ENCODE measurements at regions of chr10 and their contacts with region 1.

Region 1: DNA sequence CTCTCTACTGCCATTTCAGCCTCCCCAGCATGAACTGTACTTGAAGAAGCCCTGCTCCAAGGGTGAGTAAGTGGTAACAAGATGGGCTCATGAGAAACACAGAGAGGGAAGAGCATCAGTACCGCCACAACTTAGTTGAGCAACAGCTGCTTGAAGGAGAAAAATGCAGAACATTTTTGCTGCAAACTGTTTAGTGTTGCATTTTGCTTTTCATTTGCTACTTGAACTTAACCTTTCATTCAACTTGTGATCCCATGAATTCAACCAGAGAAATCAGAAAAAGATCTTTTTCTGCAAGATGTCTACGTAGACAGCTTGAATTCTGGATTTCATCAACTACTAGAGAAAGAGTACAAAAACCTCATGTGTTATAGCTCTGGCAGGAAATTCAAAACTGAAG is 40.7 kb downstream of the ANK3 start:
- DNase-seq: no peak
- H3K4me3 Mint-ChIP-seq: no peak overlapping the region
- H3K27ac Mint-ChIP-seq: no peak overlapping the region
- H3K4me1 Mint-ChIP-seq: no peaks in the 10 kb centered on the region
- H3K27me3 Mint-ChIP-seq: no peaks in the 10 kb centered on the region
- CTCF ChIP-seq: no peak

Region 2: GRCh38 chr10:60414805-60415585 is 66.0 kb after region 1 on chr10:
- CTCF ChIA-PET with region 1: no interaction called
- intact Hi-C with region 1: loop called (anchors 5 kb)
- DNase-seq: peak; percentile 22
- H3K4me3 Mint-ChIP-seq: no peak overlapping the region
- H3K27ac Mint-ChIP-seq: no peak overlapping the region
- H3K4me1 Mint-ChIP-seq: peaks cover 30% of the 10 kb centered on the region
- H3K27me3 Mint-ChIP-seq: no peaks in the 10 kb centered on the region
- CTCF ChIP-seq: no peak

Measured in Calu3 (cell line).